Dendritic cell treated with granulocyte-macrophage colony-stimulating factor and Interleukin-4, amounts not matched to agents 40 ng/mL and 50 ng/mL, for 4 days (primary cell): ENCODE measurements at regions of chr12 and their contacts with region 1.

Region 1: DNA sequence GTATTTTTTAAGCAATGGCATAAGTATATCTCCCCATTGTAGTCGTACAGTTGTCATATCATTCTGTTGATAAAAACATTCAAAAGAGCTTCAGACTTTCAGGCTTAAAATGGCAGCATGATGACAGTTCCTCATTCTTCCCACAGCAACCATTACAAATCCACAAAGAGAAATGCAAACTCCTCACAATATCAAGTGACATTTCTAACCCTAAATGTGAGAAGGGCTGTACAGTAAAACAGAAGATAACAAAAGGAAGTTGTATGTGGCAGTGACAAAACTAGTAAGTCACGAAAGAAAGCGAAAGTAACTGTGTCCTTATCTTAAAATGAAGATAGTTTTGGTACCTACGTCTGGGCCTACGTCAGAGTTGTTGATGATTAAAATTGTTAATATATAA is 46.7 kb downstream of the GXYLT1 start:
- H3K4me3 Mint-ChIP-seq: peak overlapping the region; percentile 66
- H3K27ac Mint-ChIP-seq: peak overlapping the region; percentile 94
- H3K4me1 Mint-ChIP-seq: peaks cover 21% of the 10 kb centered on the region
- H3K27me3 Mint-ChIP-seq: no peaks in the 10 kb centered on the region

Region 2: DNA sequence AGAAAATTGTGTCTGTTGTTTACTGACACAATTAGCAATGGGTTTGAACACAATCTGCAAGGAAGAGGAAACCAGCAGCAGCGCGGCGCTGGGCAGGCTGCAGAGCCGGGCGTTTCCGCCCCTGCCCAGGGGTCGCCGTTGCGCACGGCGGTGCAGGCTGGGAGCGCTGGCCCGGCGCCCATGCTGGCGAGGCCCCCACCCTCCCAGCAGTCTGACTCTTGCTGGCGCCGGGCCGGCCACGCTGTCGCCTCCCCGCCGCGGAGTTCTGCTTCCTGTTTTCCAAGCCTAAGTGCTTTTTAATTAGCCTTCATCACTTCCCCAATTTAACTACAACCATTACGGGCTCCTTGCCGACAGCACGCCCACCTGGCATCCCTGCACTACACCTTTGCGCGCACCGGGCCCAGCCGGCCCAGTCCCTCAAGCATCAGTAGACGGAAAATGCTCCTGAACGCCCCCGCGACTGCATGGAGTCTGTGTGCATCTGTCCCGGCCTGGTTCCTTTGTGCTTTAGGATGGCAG is 165.4 kb before region 1 on chr12:
- intact Hi-C with region 1: loop called (anchors 10 kb)
- H3K4me3 Mint-ChIP-seq: peak overlapping the region; percentile 73
- H3K27ac Mint-ChIP-seq: peak overlapping the region; percentile 47
- H3K4me1 Mint-ChIP-seq: peaks cover 28% of the 10 kb centered on the region
- H3K27me3 Mint-ChIP-seq: peaks cover 13% of the 10 kb centered on the region

Region 3: DNA sequence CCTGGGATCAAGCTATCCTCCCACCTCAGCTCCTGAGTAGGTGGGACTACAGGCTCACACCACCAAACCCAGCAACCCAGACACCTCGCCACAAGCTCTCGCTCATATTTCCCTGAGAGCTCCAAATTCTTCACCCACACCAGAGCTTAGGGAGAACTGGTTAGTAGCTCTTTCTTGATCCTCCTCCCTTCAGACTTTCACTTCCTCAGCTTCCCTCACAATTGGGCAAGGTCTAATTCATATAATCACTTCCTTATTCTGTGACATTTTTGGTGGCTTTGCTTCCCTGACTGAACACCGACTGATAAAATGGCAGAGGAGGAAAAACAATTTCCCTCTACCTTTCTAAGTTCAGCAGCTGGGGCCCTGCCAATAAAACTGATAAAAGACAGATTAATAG is 41.8 kb before region 1 on chr12:
- intact Hi-C with region 1: no loop called
- H3K4me3 Mint-ChIP-seq: peak overlapping the region; percentile 35
- H3K27ac Mint-ChIP-seq: peak overlapping the region; percentile 69
- H3K4me1 Mint-ChIP-seq: peaks cover 23% of the 10 kb centered on the region
- H3K27me3 Mint-ChIP-seq: peaks cover 7% of the 10 kb centered on the region